Left colon (tissue), 2 donors: ENCODE measurements at regions of chr2 and their contacts with region 1.

Region 1: DNA sequence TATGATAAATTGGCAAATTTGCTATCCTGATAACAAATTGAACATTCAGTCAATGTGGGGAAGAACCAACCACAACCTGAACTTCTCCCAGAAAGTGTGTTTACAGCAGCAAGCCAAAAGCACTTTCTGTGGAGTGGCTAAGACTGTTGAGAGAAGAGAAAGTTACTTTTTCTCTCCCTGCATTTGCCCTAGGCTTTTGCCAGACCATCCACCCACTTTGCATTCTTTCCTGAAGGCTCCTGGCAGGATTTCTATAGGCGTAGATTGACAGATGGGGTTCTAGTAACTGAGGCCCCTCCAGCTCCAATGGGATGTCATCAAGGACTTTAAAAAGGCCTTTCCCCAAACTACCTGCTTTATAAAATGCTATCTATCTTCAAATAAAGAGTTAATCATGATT is 215.2 kb downstream of the GULP1 start:
- DNase-seq: no peak
- ATAC-seq: no peak

Region 2: GRCh38 chr2:188280811-188281222 is 226.0 kb before region 1 on chr2:
- intact Hi-C with region 1: loop called in 1 of 2 experiments (anchors 10 kb)
- DNase-seq: no peak
- ATAC-seq: peak; percentile 40